ENCODE measurements at regions of chr18 and their contacts with region 1.

Region 1: DNA sequence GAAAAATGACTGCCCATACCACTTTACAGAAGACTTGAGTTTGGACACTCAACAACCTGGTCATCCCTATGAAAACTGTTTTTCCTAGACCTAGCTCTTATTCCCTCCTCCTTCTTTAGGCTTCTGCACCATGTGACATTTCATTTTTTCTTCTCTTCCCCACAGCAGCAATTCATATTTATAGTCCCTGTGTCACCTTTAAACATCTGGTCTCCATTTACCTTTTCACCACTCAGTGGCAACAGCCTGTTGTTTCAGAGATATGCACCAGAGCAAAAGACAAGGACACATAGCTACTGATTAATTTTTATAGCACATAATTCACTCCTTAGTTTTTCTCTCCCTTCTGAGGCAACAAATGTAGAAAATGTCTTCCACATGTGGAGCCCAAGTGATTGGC is 118.7 kb downstream of the RIT2 start:
- DNase-seq: no peak
- ATAC-seq: no peak
- H3K4me3 ChIP-seq: no peak overlapping the region
- H3K27ac ChIP-seq: no peak overlapping the region
- H3K4me1 ChIP-seq: no peaks in the 10 kb centered on the region
- H3K27me3 ChIP-seq: no peaks in the 10 kb centered on the region

Region 2: DNA sequence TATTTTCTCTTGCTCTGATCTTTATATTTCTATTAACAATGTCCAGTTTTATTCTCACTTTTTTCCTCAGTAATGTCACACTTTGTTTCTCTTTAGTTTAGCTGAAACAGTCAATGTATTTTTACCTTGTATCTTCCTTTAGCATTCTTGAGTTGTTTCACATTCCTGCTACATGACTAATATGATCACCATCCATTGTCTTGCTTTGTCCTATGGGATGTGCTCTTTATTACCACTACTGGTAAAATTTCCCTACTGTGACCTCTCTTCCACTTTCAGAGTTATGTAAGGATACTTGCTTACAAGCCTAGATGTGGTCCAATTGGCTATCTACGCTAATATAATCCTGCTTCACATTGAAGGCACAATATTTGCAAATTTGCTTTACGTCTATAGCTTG is 583.9 kb before region 1 on chr18:
- intact Hi-C with region 1: no loop called
- DNase-seq: no peak
- ATAC-seq: no peak
- H3K4me3 ChIP-seq: no peak overlapping the region
- H3K27ac ChIP-seq: no peak overlapping the region
- H3K4me1 ChIP-seq: no peaks in the 10 kb centered on the region
- H3K27me3 ChIP-seq: no peaks in the 10 kb centered on the region

Region 3: DNA sequence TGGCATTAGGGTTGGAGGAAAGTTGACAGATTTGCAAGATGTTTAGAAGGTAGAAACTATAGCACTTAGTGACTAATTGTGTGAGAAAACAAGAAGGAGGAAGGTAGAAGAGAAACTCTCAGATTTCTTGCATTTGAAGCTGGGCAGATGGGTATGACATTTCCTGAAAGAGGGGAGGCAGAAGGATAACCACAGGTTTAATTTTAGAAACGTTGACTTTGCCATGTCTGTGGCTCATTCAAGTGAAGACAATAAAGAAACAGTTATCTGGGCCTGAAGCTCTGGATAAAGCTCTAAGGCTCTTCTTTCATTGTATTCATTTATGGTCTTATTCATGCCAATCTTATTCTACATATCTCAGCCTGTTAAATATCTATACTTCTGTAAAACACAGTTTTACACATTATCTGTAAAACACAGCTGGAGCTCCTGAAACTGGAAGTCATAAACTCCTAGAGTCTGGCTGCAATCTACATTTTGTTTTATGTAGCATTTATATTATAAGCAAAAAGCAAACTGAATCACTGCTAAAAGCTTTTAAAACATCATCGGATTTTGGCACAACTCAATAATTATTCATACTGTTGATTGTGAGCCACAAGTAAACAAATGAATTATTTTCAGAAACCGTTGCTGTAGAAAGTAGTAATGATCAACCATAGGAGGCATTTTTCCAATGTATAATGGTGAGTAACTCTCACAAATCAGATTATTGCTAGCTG is 19.8 kb before region 1 on chr18:
- intact Hi-C with region 1: loop called in 1 of 2 experiments (anchors 1 kb)
- DNase-seq: no peak
- ATAC-seq: no peak
- H3K4me3 ChIP-seq: no peak overlapping the region
- H3K27ac ChIP-seq: no peak overlapping the region
- H3K4me1 ChIP-seq: no peaks in the 10 kb centered on the region
- H3K27me3 ChIP-seq: no peaks in the 10 kb centered on the region